ENCODE measurements at regions of chr17 and their contacts with region 1.

Region 1: GRCh38 chr17:16521070-16521727 is 29.2 kb upstream of the LRRC75A start:
- DNase-seq: peak; percentile 82

Region 2: GRCh38 chr17:16150251-16150856 is 370.8 kb before region 1 on chr17:
- intact Hi-C with region 1: no loop called
- DNase-seq: no peak

Region 3: DNA sequence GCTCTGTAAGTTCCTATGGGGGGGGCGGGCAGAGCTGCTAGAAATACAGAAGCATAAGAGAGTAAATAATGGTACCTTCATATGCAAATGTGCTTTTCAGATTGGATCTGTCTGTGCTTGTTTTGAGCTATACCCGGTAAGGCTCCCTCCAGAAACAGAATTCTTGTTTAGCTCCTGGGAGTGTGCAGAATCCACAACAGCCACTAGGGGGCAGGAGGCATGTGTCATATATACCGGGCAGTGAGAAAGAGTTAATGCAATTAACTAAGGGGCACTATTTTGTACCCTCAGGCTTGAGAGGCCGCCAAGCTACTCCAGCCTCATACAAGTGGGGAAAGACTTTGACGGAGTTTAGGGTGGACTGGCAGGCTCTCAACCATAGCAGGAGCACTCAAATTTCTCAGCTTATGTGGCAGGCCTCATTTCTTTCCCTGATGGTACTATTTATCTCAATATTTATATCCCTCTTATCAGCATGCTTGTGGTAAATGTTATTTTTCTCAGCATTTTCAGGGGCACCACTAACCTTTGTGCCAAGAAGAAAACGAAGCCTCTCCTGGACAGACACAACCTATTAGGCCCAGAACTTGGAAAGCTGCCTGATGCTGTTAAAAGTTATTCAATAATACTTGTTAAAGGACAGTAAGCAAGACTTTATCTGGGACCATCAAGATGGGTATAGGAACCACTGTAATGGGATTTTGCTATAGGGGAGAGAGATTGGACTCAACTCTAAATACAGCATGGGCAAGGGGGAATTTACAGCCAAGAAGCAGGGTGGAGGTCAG is 157.3 kb before region 1 on chr17:
- intact Hi-C with region 1: loop called (anchors 5 kb)
- DNase-seq: peak; percentile 78

Region 4: DNA sequence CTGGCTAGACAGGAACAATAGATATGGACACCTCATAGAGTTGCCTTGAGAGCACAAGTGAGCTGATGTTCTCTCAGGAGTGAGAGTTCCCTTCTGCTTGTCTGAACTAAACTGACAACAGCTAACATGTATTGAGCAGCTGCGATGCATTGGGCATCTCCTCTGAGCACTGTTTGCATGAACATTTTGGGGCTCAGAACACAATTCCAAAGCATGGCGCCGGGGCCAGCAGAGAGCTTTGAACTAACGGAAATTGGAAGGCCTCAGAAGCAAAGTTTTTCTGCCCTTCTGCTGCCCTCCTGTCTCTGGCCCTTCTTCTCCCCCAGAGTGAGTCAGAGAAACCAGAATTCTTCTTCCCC is 67.7 kb before region 1 on chr17:
- intact Hi-C with region 1: loop called (anchors 1 kb)
- DNase-seq: no peak

Region 5: GRCh38 chr17:16463358-16464302 is 57.6 kb before region 1 on chr17:
- intact Hi-C with region 1: loop called (anchors 2 kb)
- DNase-seq: peak; percentile 81

Region 6: DNA sequence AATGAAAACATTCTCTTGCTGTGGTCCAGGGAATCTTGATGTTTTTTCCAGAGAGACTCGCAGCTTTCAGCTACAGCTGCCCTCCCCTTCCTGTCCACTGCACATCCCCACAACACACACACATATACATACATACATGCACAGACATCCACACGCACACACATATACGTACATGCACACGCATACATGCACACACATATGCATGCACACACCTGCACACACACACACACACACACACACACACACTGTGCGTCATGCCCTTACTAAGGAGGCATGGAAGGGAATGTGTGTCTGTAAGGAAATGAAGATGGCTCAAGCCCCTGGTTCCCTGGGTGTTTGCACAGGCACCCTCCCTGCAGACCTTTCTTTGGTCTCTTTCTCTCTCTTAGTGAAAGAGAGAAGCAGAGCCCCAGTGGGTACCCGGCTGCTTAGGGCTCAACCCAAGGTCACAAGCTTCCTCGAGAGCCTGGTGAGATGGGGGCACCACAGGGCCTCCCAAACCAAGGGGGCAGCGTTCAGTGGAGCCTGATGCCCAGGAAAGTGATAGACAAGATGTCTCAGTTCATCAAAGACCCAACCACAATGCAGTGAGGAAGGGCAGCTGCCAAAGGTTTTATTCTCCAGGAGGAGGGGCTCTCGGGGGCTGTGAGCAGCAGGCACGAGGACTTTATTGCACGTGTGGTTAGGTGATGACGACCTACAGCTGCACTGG is 417.5 kb after region 1 on chr17:
- intact Hi-C with region 1: no loop called
- DNase-seq: peak; percentile 50

Measured in cardiac septum (tissue), 1 donor.